Adrenal gland (tissue), 19 donors: ENCODE measurements at regions of chr16 and their contacts with region 1.

Region 1: GRCh38 chr16:57244767-57245471 is at the start of gene ARL2BP:
- DNase-seq: peak; percentile 98 to 99 (median 98)
- H3K4me3 ChIP-seq: peak within 1 kb of the TSS; percentile 23 to 86 (median 64)
- H3K27ac ChIP-seq: peak within 1 kb of the TSS; percentile 71 to 93 (median 90)
- H3K4me1 ChIP-seq: peaks cover 6 to 11% of the 10 kb centered on the region in 2 donors
- H3K27me3 ChIP-seq: no peaks in the 10 kb centered on the region
- CTCF ChIP-seq: peak in 1 of 6 experiments; percentile 3
- POLR2A ChIP-seq: peak; percentile 76 to 77
- total RNA-seq, gene ARL2BP: 47.9 to 116 (median 58.2) TPM

Region 2: GRCh38 chr16:57194512-57194911 is 50.4 kb before region 1 on chr16:
- intact Hi-C with region 1: loop called in 1 of 2 experiments (anchors 10 kb)
- DNase-seq: no peak
- H3K4me3 ChIP-seq: no peak overlapping the region
- H3K27ac ChIP-seq: no peak overlapping the region
- H3K4me1 ChIP-seq: peaks cover 0 to 31% of the 10 kb centered on the region in 2 donors
- H3K27me3 ChIP-seq: no peaks in the 10 kb centered on the region
- CTCF ChIP-seq: no peak
- POLR2A ChIP-seq: no peak